Right lobe of liver (tissue), 6 donors: ENCODE measurements at regions of chr20 and their contacts with region 1.

Region 1: GRCh38 chr20:36199345-36200257 is 36.7 kb upstream of the AAR2 start:
- DNase-seq: peak; percentile 55 to 78 (median 70)
- ATAC-seq: peak; percentile 89 to 93 (median 91)
- H3K4me3 ChIP-seq: no peak overlapping the region
- H3K27ac ChIP-seq: no peak overlapping the region
- H3K4me1 ChIP-seq: peaks cover 0 to 5% (median 0%) of the 10 kb centered on the region in 4 donors
- H3K27me3 ChIP-seq: no peaks in the 10 kb centered on the region
- CTCF ChIP-seq: peak; percentile 82 to 96 (median 88)
- POLR2A ChIP-seq: no peak

Region 2: DNA sequence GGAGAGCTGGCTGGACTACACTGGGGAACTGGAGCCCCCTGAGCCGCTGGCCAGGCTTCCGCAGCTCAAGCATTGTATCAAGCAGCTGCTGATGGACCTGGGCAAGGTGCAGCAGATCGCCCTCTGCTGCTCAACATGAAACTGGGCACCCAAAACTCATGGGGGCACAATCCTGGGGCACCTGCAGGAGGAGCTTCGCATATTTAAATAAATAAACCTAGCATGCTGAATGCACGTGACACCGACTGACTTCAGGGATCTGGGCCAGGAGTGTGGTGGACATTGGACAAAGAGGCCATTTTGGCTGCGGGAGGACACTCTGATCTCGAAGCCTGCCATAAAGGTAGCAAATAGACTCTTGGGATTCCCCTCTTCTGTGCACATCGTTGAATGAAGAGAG is 252.1 kb before region 1 on chr20:
- intact Hi-C with region 1: no loop called
- DNase-seq: peak; percentile 23 to 56 (median 55)
- ATAC-seq: peak; percentile 50 to 75 (median 72)
- H3K4me3 ChIP-seq: no peak overlapping the region
- H3K27ac ChIP-seq: no peak overlapping the region
- H3K4me1 ChIP-seq: peaks cover 0 to 14% (median 1%) of the 10 kb centered on the region in 4 donors
- H3K27me3 ChIP-seq: no peaks in the 10 kb centered on the region
- CTCF ChIP-seq: peak in 2 of 4 donors; percentile 28 to 44
- POLR2A ChIP-seq: no peak

Region 3: DNA sequence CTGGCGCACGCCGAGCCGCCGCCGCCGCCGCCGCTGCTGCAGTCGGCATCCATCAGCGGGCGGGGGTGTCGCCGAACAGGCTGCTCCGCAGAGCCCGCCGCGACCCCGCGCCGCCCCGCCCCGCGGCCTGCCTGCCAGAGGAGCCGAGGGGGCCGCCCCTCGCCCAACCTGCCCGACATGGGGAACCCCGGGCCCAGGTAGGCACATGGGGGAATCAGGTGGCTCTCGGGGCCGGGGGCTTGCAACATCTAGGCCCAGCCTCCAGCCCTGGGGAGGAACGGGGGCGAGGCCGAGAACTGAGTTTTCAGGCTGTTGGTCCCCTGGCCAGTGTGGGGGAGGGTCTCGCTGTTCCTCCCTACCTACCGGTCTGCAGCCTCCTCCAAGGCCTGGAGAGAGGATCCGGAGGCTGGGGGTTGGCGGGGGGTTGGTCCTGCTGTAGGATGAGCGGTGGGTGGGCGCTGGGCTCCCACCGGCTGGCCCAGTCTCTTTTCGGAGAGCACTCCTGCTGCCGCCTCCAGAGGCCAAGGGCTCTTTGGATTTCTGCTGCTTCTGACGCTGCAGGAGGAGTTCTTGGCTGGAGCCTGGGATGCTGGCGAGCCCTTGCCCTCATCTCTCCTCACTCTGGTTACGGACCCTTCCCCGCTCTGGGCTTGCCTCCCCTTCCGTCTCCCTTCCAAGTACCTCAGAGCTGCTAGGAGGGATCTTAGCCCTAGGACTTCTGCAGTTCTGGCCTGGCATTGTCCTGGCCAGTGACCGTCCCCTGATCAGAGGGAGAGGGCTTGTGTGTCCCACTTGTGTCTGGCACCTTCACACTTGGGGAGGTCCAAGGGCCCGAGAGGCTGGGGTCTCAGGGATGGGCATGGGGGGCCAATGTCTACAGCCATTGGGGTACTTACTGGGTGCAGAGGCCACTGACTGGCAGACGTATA is 44.6 kb before region 1 on chr20 and contains the start of gene EPB41L1:
- intact Hi-C with region 1: loop called in 1 of 2 experiments (anchors 5 kb)
- DNase-seq: peak in 1 of 3 donors; percentile 54
- ATAC-seq: no peak
- H3K4me3 ChIP-seq: peak within 1 kb of the TSS; percentile 45 to 56 (median 45)
- H3K27ac ChIP-seq: no peak within 1 kb of the TSS
- H3K4me1 ChIP-seq: peaks cover 0 to 14% (median 4%) of the 10 kb centered on the region in 4 donors
- H3K27me3 ChIP-seq: no peaks in the 10 kb centered on the region
- CTCF ChIP-seq: no peak
- POLR2A ChIP-seq: no peak
- total RNA-seq, gene EPB41L1: 3.1 to 13.2 (median 5.3) TPM

Region 4: GRCh38 chr20:36344517-36345136 is 145.0 kb after region 1 on chr20:
- intact Hi-C with region 1: no loop called
- DNase-seq: no peak
- ATAC-seq: peak; percentile 41 to 68 (median 47)
- H3K4me3 ChIP-seq: no peak overlapping the region
- H3K27ac ChIP-seq: no peak overlapping the region
- H3K4me1 ChIP-seq: no peaks in the 10 kb centered on the region
- H3K27me3 ChIP-seq: no peaks in the 10 kb centered on the region
- CTCF ChIP-seq: no peak
- POLR2A ChIP-seq: no peak